Activated CD4-positive, alpha-beta T cell treated with anti-CD3 and anti-CD28 coated beads, Interleukin-2, amount 10 ng/mL, durations not matched to agents 24 days and 14 days (primary cell): ENCODE measurements at regions of chr3 and their contacts with region 1.

Region 1: DNA sequence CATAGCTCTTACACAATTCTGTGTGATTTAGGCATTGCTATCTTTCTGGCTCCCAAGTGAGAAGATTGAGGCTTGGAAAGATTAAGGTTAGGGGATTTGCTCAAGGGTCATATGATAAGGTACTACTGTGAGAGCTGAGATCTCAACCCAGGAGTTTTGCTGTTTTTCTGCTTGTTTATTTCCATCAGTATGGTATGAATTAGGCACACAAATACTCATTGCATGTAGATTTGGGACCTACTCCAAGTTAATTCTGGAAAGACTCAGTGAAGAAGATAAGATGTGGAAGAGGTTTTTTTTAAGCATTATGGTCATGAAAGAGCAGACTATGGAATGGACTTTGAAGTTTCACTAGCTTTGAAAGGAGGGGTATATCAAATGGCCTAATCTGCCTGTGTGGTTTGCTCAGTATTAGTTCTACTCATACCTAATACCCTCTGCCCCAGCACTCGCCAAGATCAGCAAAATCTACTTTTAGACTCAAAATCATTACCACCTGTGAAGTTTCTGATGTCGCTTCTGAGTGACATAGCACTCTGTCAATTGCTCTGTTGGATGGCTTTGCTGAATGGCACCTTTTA is 12.5 kb downstream of the MBNL1 start:
- DNase-seq: peak; percentile 63
- H3K4me3 Mint-ChIP-seq: peak overlapping the region; percentile 34
- H3K27ac Mint-ChIP-seq: peak overlapping the region; percentile 81
- H3K4me1 Mint-ChIP-seq: peaks cover 70% of the 10 kb centered on the region
- H3K27me3 Mint-ChIP-seq: no peaks in the 10 kb centered on the region

Region 2: DNA sequence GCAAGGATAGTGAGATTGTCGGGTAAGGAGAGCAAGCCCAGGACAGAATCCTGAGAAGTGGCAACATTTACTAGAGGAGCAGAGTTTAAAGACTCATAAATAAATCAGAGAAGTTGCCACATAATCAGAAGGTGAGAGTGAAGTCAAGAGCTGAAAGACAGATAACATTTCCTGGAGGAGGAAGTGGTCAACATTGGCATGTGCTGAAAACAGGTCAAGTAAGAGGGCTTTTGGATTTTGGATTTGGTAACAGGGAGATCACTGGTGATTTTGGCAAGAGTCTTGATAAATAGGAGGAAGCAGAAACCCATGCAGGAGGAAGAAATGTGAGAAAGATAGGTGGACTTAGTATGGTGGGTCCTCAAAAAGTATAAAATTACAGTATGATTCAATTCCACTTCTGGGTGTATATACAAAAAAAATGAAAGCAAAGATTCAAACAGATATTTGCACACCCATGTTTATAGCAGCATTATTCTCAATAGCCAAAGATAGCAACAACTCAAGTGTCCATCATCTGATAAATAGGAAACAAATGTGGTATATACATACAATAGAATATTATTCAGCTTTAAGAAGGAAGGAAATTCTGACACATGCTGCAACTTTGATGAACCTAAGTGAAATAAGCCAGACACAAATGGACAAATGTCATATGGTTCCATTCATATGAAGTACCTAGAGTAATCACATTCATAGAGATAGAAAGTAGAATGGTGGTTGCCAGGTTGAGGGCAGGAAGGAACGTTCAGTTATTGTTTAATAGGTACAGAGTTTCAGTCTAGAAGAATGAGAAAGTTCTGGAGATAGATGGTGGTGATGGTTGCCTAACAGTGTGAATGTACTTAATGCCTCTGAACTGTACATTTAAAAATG is 39.8 kb before region 1 on chr3:
- intact Hi-C with region 1: no loop called
- DNase-seq: peak; percentile 71
- H3K4me3 Mint-ChIP-seq: peak overlapping the region; percentile 62
- H3K27ac Mint-ChIP-seq: peak overlapping the region; percentile 89
- H3K4me1 Mint-ChIP-seq: peaks cover 48% of the 10 kb centered on the region
- H3K27me3 Mint-ChIP-seq: no peaks in the 10 kb centered on the region

Region 3: DNA sequence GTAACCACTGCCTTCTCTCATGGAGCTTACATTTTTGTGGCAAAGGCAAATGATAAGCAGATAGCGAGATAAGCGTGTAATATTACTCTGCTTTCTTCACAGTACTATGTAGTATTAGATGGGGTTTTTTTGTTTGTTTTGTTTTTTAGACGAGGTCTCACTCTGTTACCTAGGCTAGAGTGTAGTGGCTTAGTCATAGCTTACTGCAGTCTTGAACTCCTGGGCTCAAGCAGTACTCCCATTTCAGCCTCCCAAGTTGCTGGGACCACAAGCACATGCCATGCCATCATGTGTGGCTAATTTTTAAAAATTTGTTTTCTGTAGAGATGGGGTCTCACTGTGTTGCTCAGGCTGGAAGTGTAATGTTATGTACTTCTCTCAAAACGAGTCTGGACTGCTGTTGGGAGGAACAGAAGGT is 10.4 kb after region 1 on chr3:
- intact Hi-C with region 1: loop called (anchors 1 kb)
- DNase-seq: peak; percentile 57
- H3K4me3 Mint-ChIP-seq: peak overlapping the region; percentile 23
- H3K27ac Mint-ChIP-seq: peak overlapping the region; percentile 80
- H3K4me1 Mint-ChIP-seq: peaks cover 54% of the 10 kb centered on the region
- H3K27me3 Mint-ChIP-seq: no peaks in the 10 kb centered on the region